ENCODE measurements at regions of chr2 and their contacts with region 1.

Region 1: GRCh38 chr2:29196792-29197788 is 81.9 kb downstream of the CLIP4 start:
- DNase-seq: peak in 3 of 4 donors; percentile 26 to 66 (median 61)
- ATAC-seq: peak; percentile 99
- H3K4me3 ChIP-seq: no peak overlapping the region
- H3K27ac ChIP-seq: no peak overlapping the region
- H3K4me1 ChIP-seq: peaks cover 0 to 4% of the 10 kb centered on the region in 2 donors
- H3K27me3 ChIP-seq: no peaks in the 10 kb centered on the region
- CTCF ChIP-seq: peak; percentile 66 to 76

Region 2: GRCh38 chr2:28821295-28821958 is 375.7 kb before region 1 on chr2:
- intact Hi-C with region 1: loop called in 1 of 2 experiments (anchors 10 kb)
- DNase-seq: peak in 2 of 4 donors; percentile 31 to 57
- ATAC-seq: peak; percentile 97
- H3K4me3 ChIP-seq: no peak overlapping the region
- H3K27ac ChIP-seq: no peak overlapping the region
- H3K4me1 ChIP-seq: no peaks in the 10 kb centered on the region
- H3K27me3 ChIP-seq: no peaks in the 10 kb centered on the region
- CTCF ChIP-seq: peak; percentile 50 to 52

Region 3: DNA sequence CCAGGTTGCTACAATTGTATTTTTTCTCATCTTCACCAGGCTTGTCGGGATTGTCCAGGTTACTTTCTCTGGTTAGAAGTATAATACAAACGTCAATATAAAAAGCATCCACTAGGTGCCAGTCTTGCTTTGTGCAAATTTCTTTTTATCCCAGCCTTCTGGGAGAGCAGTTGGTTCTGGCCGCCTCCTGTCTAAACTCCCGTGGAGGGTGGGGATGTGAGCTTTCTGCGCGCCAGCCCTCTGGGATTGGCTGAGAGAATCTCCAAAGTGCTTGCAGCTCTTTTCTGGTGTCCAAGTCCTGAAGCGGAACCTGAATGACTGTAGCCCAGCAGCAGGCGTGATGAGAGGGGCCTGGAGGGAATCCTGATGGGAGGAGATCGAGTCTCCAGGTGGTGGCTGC is 238.4 kb before region 1 on chr2:
- intact Hi-C with region 1: loop called in 1 of 2 experiments (anchors 2 kb)
- DNase-seq: peak in 3 of 4 donors; percentile 48 to 70 (median 56)
- ATAC-seq: peak; percentile 97
- H3K4me3 ChIP-seq: no peak overlapping the region
- H3K27ac ChIP-seq: no peak overlapping the region
- H3K4me1 ChIP-seq: peaks cover 0 to 12% of the 10 kb centered on the region in 2 donors
- H3K27me3 ChIP-seq: peaks cover 0 to 4% of the 10 kb centered on the region in 2 donors
- CTCF ChIP-seq: peak in 1 of 2 donors; percentile 52

Measured in left lung (tissue), 14 donors.